Sigmoid colon (tissue), 7 donors: ENCODE measurements at regions of chr2 and their contacts with region 1.

Region 1: DNA sequence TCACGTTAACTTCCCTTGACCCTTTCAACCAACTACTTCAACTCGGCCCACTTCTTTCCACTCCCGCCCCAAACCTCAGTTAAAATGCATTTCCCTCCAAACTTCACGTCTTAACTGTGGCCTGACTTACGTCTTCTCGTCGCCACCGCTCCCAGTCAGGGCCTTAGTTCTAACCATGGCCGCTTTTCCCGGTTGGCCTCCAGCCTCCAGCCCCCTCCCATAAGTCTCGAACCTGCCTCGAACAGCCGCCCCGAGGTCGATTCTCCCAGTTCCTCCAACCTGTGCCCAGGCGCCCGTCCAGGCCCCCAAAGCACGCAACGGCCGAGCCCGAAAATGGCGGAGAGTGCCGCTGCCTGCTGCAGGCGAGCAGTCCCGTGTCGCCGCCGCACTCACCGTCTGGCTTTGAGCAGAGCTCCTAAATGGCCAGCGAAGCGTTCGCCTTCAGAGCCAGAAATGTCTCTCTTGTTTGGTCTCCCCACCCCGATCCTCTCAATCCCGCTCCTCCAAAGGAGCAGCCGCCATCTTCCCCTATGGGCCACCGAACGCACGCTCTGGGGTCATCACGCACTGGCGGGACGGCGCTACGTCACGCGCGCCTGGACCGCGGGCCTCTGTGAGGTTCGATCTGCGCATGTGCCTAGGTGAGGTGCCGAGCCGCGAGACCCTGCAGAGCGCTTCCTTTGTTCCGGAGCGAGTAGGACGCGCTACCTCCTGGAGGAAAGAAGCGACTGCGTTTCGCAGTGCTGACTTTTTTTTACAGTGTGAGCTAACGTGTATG is at the start of gene WDR33:
- DNase-seq: peak; percentile 95
- H3K4me3 ChIP-seq: peak within 1 kb of the TSS; percentile 55 to 92 (median 71)
- H3K27ac ChIP-seq: peak within 1 kb of the TSS; percentile 82 to 94 (median 92)
- H3K4me1 ChIP-seq: peaks cover 0 to 41% (median 37%) of the 10 kb centered on the region in 4 donors
- H3K27me3 ChIP-seq: no peaks in the 10 kb centered on the region
- CTCF ChIP-seq: peak in 1 of 4 experiments; percentile 11
- EP300 ChIP-seq: no peak
- POLR2A ChIP-seq: peak; percentile 55 to 61
- total RNA-seq, gene WDR33: 37.8 to 45.2 (median 44.3) TPM

Region 2: DNA sequence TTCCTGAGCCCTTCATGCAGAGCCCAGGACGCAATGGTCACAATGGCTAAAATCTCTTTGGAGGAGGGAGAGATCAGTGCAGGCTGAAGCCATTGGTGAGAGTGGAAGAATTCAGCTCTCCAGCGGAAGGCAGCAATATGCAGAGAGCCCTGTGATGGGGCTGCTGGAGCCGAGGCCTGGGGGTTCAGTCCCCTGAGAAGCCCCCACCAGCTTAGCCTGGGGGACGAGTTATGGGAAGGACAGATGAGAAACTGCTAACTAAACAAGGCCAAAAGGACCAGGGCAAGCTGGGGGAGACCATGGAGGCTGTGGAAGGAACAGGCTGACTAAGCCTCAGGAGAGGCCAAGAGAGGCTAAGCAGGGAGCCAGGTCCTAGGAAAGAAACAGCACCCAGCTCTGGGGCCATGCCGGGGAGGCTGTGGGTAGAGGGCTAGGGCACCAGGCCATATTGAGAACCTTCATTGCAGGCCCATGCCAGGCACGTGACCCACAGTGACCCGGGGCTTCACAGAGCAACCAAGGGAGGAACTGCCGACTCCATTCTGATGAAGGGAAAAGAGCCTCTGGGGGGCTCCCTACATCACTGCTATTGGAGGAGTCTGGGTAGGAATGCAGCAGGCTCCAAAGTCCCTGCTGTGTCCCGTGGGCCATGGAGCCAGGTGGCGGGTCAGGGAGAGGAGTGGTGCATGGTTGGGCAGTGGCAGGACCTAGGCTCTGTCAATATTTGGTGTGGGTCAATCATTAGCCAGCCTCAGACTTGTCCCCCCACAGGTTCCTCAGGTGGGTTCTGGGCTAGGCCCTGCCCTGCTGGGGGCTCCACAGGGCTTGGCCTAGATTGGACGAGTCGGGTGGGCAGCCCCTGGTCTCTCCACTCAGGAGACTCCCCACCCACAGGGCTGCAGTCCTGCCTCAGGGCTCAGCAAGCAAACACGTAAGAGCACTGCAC is 372.8 kb before region 1 on chr2:
- intact Hi-C with region 1: no loop called
- DNase-seq: no peak
- H3K4me3 ChIP-seq: no peak overlapping the region
- H3K27ac ChIP-seq: no peak overlapping the region
- H3K4me1 ChIP-seq: no peaks in the 10 kb centered on the region
- H3K27me3 ChIP-seq: no peaks in the 10 kb centered on the region
- CTCF ChIP-seq: no peak
- EP300 ChIP-seq: no peak
- POLR2A ChIP-seq: no peak

Region 3: GRCh38 chr2:127591221-127591923 is 219.4 kb before region 1 on chr2:
- intact Hi-C with region 1: loop called (anchors 5 kb)
- DNase-seq: peak; percentile 85
- H3K4me3 ChIP-seq: no peak overlapping the region
- H3K27ac ChIP-seq: no peak overlapping the region
- H3K4me1 ChIP-seq: no peaks in the 10 kb centered on the region
- H3K27me3 ChIP-seq: no peaks in the 10 kb centered on the region
- CTCF ChIP-seq: peak; percentile 81 to 94 (median 90)
- EP300 ChIP-seq: no peak
- POLR2A ChIP-seq: no peak

Region 4: DNA sequence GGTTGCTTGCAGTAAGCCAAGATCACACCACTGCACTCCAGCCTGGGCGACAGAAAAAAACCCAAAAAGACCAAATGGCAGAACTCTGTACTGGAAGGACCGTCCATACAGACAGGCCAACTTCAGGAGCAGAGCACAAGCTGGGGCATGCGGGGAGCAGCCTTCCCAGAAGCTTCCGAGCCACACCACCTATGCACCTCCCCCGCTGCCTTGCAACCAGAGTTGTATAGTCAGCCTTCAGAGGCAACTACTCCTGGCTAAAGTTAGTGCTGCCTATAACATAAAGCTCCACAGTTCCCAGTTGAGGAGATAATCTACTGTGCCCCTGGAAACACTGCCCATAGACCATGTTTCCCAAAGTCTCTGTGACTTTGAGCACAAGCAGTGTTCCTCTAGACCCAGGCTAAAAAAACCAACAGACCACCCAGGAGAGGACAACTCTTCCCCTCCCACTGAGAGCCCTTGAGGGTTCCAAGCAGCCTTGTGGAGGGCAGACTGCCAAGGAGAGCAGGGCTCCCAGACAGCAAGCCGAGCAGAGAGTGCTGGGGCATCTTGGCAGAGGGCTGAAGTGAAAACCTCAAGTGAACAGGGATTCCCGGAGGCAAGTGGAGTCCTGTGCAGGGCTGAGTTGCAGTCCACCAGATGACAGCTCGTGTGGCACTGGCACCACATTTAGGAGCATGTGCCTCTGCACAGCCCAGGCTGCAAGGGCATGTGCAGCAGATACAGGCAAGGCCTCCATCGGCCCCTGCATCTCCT is 102.7 kb before region 1 on chr2:
- intact Hi-C with region 1: loop called (anchors 5 kb)
- DNase-seq: peak; percentile 79
- H3K4me3 ChIP-seq: no peak overlapping the region
- H3K27ac ChIP-seq: peak overlapping the region in 3 of 4 donors; percentile 23 to 49 (median 42)
- H3K4me1 ChIP-seq: peaks cover 0 to 38% (median 35%) of the 10 kb centered on the region in 4 donors
- H3K27me3 ChIP-seq: no peaks in the 10 kb centered on the region
- CTCF ChIP-seq: no peak
- EP300 ChIP-seq: no peak
- POLR2A ChIP-seq: no peak

Region 5: DNA sequence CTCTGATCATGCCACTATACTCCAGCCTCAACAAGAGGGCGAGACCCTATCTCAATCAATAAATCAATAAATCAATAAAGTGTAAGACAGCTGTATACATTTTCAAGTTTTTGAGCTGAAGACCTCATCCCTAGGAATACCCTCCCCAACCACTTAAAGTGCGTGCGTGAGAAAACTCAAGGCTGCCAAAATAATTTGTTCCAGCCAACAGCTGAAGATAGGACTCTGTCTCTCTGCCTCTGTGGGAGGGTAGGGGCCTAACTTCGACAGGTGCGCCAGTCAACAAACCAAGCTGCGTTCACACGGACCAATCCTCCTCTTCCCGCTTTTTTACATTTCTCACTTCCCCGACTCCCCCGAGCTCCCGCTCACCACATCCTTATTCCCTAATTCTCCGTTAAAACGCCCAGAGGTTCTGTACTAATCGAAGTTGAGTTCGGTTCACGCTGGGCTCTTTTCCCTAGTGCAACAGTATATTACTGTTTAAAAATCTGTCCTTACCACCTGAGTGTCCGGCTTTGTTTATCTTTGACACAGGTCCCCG is 46.5 kb after region 1 on chr2:
- intact Hi-C with region 1: loop called (anchors 5 kb)
- DNase-seq: no peak
- H3K4me3 ChIP-seq: peak overlapping the region; percentile 61 to 96 (median 89)
- H3K27ac ChIP-seq: peak overlapping the region; percentile 75 to 86 (median 84)
- H3K4me1 ChIP-seq: peaks cover 0 to 42% (median 25%) of the 10 kb centered on the region in 4 donors
- H3K27me3 ChIP-seq: no peaks in the 10 kb centered on the region
- CTCF ChIP-seq: no peak
- EP300 ChIP-seq: no peak
- POLR2A ChIP-seq: no peak

Region 6: DNA sequence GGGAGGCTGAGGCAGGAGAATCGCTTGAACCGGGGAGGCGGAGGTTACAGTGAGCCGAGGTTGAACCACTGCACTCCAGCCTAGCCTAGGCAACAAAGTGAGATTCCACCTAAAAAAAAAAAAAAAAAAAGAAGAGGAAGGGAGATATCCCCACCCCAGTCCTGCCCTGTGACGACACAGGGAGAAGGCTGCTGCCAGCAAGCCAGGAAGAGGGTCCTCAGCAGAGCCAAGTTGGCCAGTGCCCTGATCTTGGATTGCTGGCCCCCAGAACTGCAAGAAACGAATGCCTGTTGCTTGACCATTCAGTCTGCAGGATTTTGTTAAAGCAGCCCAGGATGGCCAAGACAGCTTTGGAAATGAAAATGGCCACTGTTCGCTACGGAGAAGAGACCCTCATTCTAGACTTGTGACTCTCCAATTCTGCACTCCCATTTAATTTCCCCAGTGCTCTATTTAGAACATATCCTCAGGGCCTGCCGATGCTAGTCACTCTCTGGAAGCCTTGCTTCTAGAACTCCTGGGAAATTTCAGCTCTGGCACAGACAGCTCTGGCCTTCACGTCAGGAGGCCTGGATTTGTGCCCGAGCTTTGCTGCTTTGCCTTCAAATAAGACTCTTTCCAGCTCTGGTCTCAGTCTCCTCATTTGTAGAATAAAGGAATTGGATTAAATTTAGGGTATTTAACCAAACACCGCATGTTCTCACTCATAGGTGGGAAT is 90.7 kb after region 1 on chr2:
- intact Hi-C with region 1: no loop called
- DNase-seq: peak; percentile 92
- H3K4me3 ChIP-seq: no peak overlapping the region
- H3K27ac ChIP-seq: peak overlapping the region; percentile 42 to 84 (median 78)
- H3K4me1 ChIP-seq: peaks cover 0 to 17% (median 10%) of the 10 kb centered on the region in 4 donors
- H3K27me3 ChIP-seq: no peaks in the 10 kb centered on the region
- CTCF ChIP-seq: no peak
- EP300 ChIP-seq: peak in 1 of 4 donors; percentile 4
- POLR2A ChIP-seq: no peak